ENCODE measurements at regions of chr12 and their contacts with region 1.

Region 1: DNA sequence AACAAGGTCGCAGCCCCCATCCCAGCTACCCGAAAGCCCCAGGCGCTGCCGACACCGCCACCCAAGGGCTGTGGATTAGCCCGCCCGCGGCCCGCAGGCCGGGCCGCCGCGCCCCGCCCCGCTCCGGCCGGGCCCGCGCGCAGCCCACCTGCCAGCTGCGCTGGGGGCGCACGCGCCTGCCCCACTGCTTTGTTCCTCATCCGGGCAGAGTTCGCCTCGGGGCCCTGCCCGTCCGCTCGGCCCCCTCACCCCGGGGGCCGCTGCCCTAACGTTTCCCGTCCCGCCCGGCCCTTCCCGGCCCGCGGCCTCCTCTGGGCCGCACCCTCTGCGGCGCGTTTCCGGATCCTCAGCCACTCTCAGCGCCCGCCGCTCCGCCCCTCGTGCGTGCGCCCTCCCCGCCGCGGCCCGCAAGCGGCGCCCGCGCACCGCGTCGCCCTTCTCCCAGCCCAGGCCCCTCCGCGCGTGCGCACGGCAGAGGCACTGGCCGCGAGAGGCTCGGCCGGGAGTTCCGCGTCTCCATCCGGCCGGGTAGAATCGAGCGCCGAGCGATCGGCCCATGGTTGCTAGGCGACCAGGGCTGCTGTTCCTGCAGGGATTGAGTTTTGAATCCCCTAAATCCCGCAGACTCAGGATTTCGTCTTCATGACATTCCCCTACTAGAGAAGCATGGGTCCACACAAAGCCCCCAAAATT is at the start of gene PRDM4:
- DNase-seq: peak; percentile 84 to 97 (median 93)

Region 2: GRCh38 chr12:107461222-107461975 is 299.6 kb before region 1 on chr12:
- intact Hi-C with region 1: no loop called
- DNase-seq: peak in 2 of 42 donors; percentile 10 to 45

Region 3: DNA sequence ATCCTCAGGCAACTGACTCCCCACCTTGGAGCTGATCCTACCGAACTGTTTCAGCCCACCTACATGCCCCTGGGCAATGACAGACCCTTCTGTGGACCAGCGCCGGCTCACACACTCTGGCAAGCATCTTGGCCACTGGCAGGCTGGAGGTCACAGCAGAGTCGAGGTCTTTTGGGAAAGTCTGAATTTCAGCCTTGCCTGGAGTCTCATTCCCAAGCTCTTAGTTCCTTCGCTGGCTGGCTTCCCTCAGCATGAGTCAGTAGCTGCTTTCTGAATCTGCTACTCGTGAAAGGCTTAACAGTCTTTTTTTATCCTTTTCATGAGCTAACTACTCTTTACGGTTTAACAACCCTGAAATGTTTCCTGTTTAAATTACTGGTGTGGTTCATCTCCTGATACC is 58.0 kb after region 1 on chr12:
- intact Hi-C with region 1: no loop called
- DNase-seq: peak in 21 of 42 donors; percentile 1 to 73 (median 27)

Region 4: DNA sequence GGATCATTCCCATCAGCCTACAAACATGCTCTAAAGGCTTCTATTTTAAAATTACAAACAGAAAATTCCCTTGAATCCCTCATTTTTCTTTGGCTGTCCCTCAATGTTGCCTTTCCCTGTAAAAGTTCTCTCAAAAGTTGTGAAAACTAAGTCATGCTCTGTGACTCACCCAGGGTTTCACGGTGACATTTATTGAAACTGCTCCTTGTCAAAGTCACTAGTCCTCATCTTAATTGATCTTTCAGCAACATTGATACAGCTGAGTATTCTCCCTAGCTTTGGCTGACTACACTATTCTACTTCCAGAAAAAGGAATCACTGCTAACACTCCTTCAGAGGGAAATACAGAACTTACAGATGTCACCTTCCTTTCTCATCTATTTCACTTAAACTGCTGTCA is 79.2 kb after region 1 on chr12:
- intact Hi-C with region 1: no loop called
- DNase-seq: no peak

Region 5: DNA sequence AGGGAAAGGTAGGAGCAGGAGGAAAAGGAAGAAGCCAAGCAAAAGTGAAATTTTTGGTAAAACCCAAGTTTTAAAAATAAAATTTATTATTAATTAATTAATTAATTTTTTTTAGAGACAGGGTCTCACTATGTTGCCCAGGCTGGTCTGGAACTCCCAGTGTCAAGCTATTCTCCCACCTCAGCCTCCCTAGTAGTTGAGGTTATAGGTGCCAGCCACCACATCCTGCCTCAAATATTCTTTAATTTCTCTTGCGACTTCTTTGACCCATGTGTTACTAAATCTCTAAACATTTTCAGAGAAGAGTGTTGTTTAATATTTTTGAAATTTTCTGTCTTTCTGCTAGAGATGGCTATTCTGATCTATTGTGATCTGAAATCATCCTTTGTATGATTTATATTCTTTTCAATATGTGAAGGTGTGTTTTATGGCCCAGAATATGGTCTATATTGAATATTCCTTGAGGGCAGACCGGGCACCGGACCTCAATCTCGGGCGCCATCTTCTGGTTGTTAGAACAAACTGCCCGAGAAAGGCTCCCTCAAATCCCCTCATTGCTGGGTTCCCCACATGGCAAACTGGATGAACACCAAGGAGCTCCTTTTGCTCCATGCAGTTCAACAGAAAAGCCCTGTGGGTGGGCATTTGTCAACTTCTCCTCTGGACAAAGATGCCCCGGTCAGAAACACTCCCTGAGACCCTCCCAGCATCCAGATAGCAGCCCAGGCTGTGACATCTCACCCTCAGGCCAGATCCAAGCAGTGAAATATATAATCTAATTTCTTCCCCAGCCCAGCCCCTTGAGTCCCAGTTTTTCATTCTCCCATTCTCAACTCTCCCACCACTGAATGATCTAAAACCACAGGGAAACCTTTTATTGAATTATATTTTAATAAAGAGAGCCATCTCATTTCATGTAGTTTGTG is 124.1 kb after region 1 on chr12:
- intact Hi-C with region 1: loop called (anchors 10 kb)
- DNase-seq: peak; percentile 23 to 81 (median 52)

Measured in head of caudate nucleus (tissue), 42 donors.